Activated B cell treated with CpG ODN at 0.5 μM for 24 hours (primary cell): ENCODE measurements at regions of chr10 and their contacts with region 1.

Region 1: DNA sequence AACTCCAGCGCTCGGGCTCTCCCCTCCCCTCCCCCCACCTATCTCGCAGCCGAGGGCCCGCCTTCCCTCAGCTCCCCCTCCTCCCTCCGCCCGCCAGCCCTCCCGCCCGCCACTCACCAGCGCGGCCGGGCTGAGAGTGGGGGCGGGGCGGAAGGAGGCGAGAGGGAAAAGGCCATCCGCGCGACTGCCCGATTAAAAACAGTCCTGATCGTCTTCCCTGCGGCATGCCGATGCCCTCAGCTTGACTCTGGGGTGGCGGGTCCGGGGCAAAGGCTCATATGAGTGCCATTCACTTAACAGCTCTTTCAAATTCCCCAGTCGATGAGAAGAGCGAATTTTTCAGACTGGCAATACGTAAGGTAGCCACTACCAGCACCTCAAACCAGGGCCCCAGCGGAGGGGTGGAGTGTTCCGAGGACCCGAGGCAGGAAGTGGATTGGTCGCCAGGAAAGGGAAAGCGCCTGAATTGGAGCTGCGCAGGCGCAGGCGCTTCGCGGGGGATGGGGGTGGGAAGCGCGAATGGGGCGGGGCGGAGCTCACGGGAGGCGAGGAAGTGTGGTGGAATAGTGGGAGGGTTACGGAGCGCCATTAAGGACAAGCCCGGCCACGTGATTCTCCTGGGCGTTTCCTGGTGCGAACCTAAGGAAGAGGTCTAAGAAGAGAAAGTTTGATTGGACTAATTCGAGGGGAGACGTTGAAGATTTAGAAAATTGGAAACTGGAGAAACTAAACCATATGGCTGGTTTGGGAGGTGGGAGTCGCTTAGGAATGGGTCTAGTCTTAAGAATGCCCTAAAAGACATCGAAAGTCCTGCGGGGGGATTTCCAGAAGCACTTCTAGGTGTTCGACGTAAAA is at the start of gene UPF2:
- DNase-seq: peak; percentile 90
- ATAC-seq: peak; percentile 74
- H3K4me3 Mint-ChIP-seq: peak within 1 kb of the TSS; percentile 95
- H3K27ac Mint-ChIP-seq: peak within 1 kb of the TSS; percentile 100
- H3K4me1 Mint-ChIP-seq: peaks cover 49% of the 10 kb centered on the region
- H3K27me3 Mint-ChIP-seq: no peaks in the 10 kb centered on the region
- CTCF ChIP-seq: no peak
- total RNA-seq, gene UPF2: 57.9 and 58.0 TPM in 2 replicates

Region 2: GRCh38 chr10:11706895-11707567 is 336.0 kb before region 1 on chr10:
- CTCF ChIA-PET with region 1: no interaction called
- POLR2A ChIA-PET with region 1: no interaction called
- intact Hi-C with region 1: no loop called
- DNase-seq: no peak
- ATAC-seq: no peak
- H3K4me3 Mint-ChIP-seq: no peak overlapping the region
- H3K27ac Mint-ChIP-seq: no peak overlapping the region
- H3K4me1 Mint-ChIP-seq: peaks cover 32% of the 10 kb centered on the region
- H3K27me3 Mint-ChIP-seq: no peaks in the 10 kb centered on the region
- CTCF ChIP-seq: no peak

Region 3: DNA sequence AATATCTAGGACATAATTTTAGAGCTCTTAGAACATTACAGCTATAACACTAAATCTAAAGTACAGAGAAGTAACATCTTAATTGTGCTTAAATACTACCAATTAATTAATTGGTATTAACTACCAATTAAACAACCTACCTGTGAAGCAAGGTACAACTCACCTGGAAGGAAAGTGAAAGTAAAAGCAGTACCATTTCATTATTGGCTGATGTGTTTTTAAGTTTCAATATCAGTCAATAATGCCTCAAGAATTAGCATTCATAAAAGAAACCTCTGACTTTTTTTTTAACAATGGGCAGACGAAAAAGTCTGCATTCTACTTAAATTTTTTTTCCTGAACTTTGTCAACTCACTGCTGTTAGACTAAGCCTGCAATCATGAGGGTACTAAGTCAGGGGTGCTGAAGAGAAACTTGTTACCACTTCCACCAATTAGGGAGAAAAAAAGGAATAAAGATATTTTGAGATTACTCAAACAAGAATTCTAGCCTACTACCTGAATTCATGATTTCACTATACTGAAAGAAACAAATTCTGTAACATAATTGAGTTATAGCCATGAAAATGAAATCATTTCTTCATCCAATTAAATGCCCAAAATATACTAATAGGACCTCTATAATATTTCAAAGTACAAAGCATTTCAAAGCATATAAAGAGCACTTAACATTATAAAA is 20.3 kb before region 1 on chr10:
- CTCF ChIA-PET with region 1: no interaction called
- POLR2A ChIA-PET with region 1: interaction called, 13 read pairs
- intact Hi-C with region 1: loop called (anchors 1 kb)
- DNase-seq: no peak
- ATAC-seq: peak; percentile 40
- H3K4me3 Mint-ChIP-seq: peak overlapping the region; percentile 28
- H3K27ac Mint-ChIP-seq: peak overlapping the region; percentile 78
- H3K4me1 Mint-ChIP-seq: peaks cover 40% of the 10 kb centered on the region
- H3K27me3 Mint-ChIP-seq: no peaks in the 10 kb centered on the region
- CTCF ChIP-seq: no peak

Region 4: GRCh38 chr10:12062754-12063482 is 19.9 kb after region 1 on chr10:
- CTCF ChIA-PET with region 1: no interaction called
- POLR2A ChIA-PET with region 1: interaction called, 277 read pairs
- intact Hi-C with region 1: loop called (anchors 1 kb)
- DNase-seq: no peak
- ATAC-seq: peak; percentile 71
- H3K4me3 Mint-ChIP-seq: peak overlapping the region; percentile 44
- H3K27ac Mint-ChIP-seq: peak overlapping the region; percentile 51
- H3K4me1 Mint-ChIP-seq: peaks cover 17% of the 10 kb centered on the region
- H3K27me3 Mint-ChIP-seq: no peaks in the 10 kb centered on the region
- CTCF ChIP-seq: no peak

Region 5: GRCh38 chr10:12121673-12122072 is 78.6 kb after region 1 on chr10:
- CTCF ChIA-PET with region 1: no interaction called
- POLR2A ChIA-PET with region 1: interaction called, 39 read pairs
- intact Hi-C with region 1: loop called (anchors 1 kb)
- DNase-seq: no peak
- ATAC-seq: no peak
- H3K4me3 Mint-ChIP-seq: peak overlapping the region; percentile 68
- H3K27ac Mint-ChIP-seq: peak overlapping the region; percentile 92
- H3K4me1 Mint-ChIP-seq: peaks cover 26% of the 10 kb centered on the region
- H3K27me3 Mint-ChIP-seq: no peaks in the 10 kb centered on the region
- CTCF ChIP-seq: no peak

Region 6: DNA sequence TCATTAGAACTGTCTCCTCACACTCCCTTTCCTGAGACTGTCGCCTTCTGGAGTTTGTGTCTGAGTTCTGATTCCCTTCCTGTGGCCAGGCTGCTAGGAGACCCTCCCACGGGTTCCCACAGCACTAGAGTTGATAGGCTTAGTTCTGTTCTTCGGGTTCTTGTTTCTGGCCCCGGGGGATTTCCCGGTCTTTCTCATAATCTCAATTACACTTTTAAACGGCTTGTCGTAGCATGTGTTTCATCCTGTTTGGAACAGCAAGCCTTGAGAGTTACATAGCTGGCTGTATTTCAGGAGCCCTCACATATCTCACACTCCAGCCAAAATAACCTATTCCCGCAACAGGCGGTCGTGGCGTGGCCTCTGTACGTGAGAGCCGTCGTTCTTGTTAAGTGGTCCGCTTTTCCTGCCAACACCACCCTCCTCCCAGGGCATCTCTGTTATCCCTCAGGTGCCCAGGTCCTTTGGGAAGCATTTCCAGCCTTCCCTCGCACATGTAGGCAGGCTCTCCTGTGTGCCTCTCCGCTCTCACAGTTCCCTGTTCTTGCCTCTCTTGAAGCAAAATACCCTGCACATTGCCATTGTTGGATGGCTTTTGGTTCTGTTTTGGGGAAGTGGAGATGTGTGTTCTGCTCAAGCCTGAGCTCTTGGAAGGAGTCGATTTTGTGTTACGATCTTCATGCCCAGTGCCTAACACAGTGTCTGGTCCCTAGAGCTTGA is 198.9 kb after region 1 on chr10:
- CTCF ChIA-PET with region 1: no interaction called
- POLR2A ChIA-PET with region 1: no interaction called
- intact Hi-C with region 1: loop called (anchors 2 kb)
- DNase-seq: no peak
- ATAC-seq: no peak
- H3K4me3 Mint-ChIP-seq: peak overlapping the region; percentile 29
- H3K27ac Mint-ChIP-seq: peak overlapping the region; percentile 75
- H3K4me1 Mint-ChIP-seq: peaks cover 69% of the 10 kb centered on the region
- H3K27me3 Mint-ChIP-seq: no peaks in the 10 kb centered on the region
- CTCF ChIP-seq: no peak

Region 7: GRCh38 chr10:13348216-13349017 is 1305.4 kb after region 1 on chr10 and contains the start of gene SEPHS1:
- CTCF ChIA-PET with region 1: no interaction called
- POLR2A ChIA-PET with region 1: no interaction called
- intact Hi-C with region 1: loop called (anchors 10 kb)
- DNase-seq: peak; percentile 65
- ATAC-seq: peak; percentile 66
- H3K4me3 Mint-ChIP-seq: peak within 1 kb of the TSS; percentile 89
- H3K27ac Mint-ChIP-seq: peak within 1 kb of the TSS; percentile 88
- H3K4me1 Mint-ChIP-seq: peaks cover 59% of the 10 kb centered on the region
- H3K27me3 Mint-ChIP-seq: peaks cover 8% of the 10 kb centered on the region
- CTCF ChIP-seq: no peak
- total RNA-seq, gene SEPHS1: 36.7 and 38.0 TPM in 2 replicates